HCT116 (cell line): ENCODE measurements at regions of chr7 and their contacts with region 1.

Region 1: GRCh38 chr7:116601426-116601825 is 70.6 kb upstream of the MET start:
- DNase-seq: no peak
- ATAC-seq: no peak
- H3K4me3 ChIP-seq: no peak overlapping the region
- H3K27ac ChIP-seq: no peak overlapping the region
- H3K4me1 ChIP-seq: no peaks in the 10 kb centered on the region
- H3K27me3 ChIP-seq: no peaks in the 10 kb centered on the region
- CTCF ChIP-seq: no peak
- POLR2A ChIP-seq: no peak
- RAD21 ChIP-seq: no peak

Region 2: DNA sequence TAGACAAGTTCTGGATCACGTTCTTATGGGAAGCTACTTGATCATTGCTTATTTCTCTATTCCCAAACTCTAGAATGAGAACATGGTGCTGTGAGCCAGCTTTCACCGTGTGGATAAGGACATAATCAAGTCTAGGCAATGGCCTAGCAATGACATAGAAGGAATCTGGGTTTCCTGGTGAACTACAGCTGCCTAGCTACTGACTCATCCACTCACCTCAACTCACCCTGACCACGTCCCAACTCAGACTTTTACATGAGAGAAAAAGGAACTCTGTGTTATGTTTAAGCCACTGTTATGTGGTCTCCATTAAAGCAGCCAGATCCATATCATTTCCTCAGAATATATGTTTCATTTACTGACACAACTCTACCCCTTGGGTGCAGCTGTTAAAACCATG is 51.8 kb after region 1 on chr7:
- CTCF ChIA-PET with region 1: no interaction called
- POLR2A ChIA-PET with region 1: no interaction called
- RAD21 ChIA-PET with region 1: no interaction called
- intact Hi-C with region 1: loop called (anchors 5 kb)
- DNase-seq: peak; percentile 49
- ATAC-seq: peak; percentile 95
- H3K4me3 ChIP-seq: peak overlapping the region in 1 of 2 experiments; percentile 1; a peak in 1 of 4 replicates
- H3K27ac ChIP-seq: no peak overlapping the region
- H3K4me1 ChIP-seq: peaks cover 7 to 28% of the 10 kb centered on the region in 2 experiments
- H3K27me3 ChIP-seq: no peaks in the 10 kb centered on the region
- CTCF ChIP-seq: no peak
- POLR2A ChIP-seq: no peak
- RAD21 ChIP-seq: no peak